ENCODE measurements at regions of chr1 and their contacts with region 1.

Region 1: DNA sequence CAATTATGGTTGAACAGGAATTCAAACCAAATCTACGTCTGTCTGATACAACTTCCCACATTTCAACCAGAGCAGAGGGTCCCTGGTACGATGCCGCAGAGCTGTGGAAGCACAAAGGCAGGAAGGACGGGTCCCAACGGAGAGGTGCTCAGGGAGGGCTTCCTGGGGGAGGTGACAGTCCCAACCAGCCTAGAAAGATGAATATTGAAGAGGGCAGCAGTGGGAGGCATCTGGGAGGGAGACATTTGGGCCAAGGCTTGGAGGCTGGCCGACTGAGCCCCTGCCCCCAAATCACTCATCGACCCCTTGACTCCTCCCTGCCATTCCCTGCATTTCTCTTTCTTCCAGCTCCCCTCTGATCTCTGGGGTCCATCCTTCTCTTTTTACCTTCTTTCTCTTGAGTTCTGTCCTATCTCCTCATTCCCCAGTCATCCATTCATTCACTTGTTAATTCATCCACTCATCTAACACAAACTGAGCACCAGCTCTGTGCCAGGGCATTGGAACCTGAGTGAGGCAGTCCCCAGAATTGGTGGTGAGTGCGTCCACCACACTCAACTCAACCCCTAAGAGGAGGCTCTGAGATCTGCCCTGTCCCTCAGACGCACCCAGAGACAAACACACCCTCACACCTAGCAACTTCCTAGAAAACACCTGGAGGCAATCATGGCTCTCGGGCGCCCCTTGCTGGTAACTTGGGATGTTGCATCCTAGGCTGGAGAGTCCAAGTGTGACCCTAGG is 13.2 kb upstream of the CELA3B start:
- DNase-seq: peak; percentile 92

Region 2: DNA sequence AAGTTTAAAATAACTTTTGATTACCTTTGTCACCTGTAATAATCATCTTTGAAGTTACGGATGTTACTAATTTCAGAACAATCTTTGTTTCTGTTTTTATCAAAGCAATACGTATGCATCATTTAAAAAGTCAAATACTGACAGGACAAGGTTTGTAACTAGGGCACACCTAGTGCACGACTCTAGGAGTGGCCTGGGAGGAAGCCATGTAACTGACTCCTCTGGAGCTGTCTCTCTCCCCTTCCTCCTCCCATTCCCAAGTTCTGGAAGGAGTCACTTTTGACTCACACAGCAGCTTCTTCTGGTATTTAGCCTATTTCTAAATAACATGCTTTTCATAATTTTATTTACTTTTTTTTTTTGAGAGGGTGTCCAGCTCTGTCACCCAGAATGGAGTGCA is 282.7 kb before region 1 on chr1:
- intact Hi-C with region 1: no loop called
- DNase-seq: no peak

Region 3: DNA sequence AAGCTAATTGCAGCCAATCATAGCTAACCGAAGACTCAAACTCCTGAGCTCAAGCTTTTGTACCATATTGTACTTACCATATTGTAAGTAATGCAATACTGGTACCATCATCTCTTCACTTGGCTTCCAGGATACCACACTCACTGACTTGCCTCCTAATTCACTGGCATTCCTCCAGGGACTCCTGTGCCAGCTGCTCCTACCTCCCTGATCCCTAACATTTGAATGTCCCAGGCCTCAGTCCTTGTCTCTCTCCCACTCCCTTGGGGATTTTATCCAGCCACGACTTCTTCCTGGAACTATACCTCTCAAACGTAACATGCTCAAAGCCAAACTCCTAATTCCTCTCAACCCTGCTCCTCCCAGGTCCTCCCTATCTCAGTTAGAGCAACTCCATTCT is 214.5 kb before region 1 on chr1:
- intact Hi-C with region 1: no loop called
- DNase-seq: no peak

Region 4: GRCh38 chr1:21869620-21870121 is 94.0 kb before region 1 on chr1:
- intact Hi-C with region 1: loop called (anchors 5 kb)
- DNase-seq: peak; percentile 88

Region 5: DNA sequence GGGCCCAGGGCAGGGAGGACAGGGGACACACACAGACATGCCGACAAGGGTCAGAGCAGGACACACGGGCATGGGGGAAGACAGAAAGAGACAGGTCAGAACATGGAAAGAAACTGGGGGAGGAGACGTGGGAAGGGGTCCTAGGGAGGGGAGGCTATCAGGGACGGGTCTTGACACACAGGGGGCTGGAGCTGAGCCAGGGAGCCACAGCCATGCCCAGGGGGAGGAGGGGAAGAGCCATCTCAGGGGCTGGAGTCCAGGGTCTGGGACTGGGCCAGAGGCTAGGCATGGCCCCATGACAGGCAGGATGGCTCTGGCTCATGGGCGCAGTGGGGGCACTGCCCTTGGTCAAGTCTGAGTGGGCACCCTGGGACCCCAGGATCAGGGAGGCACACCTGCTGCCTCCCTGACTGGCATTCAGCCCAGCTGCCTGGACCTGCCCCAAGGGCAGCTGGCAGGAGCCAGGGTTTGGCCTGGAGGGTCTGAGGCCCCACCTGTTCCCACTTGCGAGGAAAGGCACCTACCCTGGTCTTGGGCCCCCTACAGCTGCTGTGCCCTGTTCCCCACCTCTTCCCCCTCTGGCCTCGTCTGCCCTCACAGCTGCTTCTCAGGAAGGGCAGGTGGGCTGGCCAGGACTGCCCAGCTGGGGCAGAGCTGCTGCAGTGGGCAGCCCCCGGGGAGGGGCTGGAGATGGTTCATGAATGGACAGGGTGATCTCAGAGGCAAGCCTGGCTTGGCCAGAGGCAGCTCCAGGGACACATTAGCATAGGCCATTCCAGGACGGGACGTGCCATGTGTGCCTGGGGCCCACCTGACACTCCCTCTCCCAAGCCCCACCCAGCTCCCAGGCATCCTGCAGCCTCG is 69.4 kb before region 1 on chr1:
- intact Hi-C with region 1: no loop called
- DNase-seq: no peak

Region 6: DNA sequence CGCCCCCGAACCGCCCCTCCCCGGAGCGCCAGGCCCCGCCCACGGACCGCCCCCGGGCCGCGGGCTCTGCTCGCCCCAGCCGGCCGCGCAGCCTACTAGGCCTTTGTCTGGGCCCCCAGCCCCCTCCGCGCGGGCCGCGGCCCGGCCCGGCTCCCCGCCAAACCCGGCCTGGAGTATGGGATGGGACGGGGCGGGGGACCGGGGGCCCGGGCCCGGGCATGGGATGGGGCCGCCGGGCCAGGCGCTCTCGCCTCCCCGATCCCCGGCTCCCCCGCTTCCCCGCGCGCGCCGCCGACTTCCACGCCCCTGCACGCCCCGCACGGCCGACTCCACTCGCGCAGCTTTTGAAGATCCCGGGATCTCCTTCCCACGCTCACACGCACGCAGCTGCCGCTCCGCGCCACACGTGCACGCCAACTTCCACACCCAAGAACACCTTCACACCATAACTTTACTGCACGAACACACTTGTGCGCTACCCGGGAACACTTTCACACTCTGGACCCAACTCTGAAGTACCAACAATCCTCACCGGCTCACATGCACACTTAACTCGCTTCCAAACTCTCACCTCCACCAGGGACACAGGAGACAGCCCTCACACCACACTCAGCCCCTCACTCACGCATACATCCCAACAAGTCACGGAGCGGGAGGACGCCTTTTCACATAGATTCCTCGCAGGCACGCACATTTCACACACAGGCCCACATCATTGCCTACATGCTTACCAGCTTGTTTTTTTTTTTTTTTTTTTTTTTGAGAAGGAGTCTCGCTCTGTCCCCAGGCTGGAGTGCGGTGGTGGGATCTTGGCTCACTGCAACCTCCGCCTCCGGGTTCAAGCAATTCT is 26.1 kb before region 1 on chr1:
- intact Hi-C with region 1: no loop called
- DNase-seq: peak; percentile 92